Body of pancreas (tissue), 4 donors: ENCODE measurements at regions of chr4 and their contacts with region 1.

Region 1: GRCh38 chr4:8917868-8918783 is 46.5 kb upstream of the HMX1 start:
- DNase-seq: peak; percentile 51 to 78 (median 69)
- ATAC-seq: peak; percentile 73
- H3K4me3 ChIP-seq: no peak overlapping the region
- H3K27ac ChIP-seq: no peak overlapping the region
- H3K4me1 ChIP-seq: no peaks in the 10 kb centered on the region
- H3K27me3 ChIP-seq: peaks cover 0 to 5% of the 10 kb centered on the region in 2 donors
- CTCF ChIP-seq: peak; percentile 66 to 86 (median 78)
- POLR2A ChIP-seq: no peak

Region 2: GRCh38 chr4:8607603-8608481 is 310.3 kb before region 1 on chr4:
- intact Hi-C with region 1: loop called (anchors 10 kb)
- DNase-seq: peak in 3 of 4 donors; percentile 35 to 52 (median 44)
- ATAC-seq: peak; percentile 15
- H3K4me3 ChIP-seq: no peak overlapping the region
- H3K27ac ChIP-seq: no peak overlapping the region
- H3K4me1 ChIP-seq: no peaks in the 10 kb centered on the region
- H3K27me3 ChIP-seq: peaks cover 0 to 7% of the 10 kb centered on the region in 2 donors
- CTCF ChIP-seq: peak; percentile 62 to 98 (median 79)
- POLR2A ChIP-seq: no peak